Left ventricle myocardium superior (tissue), 1 donor: ENCODE measurements at regions of chr1 and their contacts with region 1.

Region 1: DNA sequence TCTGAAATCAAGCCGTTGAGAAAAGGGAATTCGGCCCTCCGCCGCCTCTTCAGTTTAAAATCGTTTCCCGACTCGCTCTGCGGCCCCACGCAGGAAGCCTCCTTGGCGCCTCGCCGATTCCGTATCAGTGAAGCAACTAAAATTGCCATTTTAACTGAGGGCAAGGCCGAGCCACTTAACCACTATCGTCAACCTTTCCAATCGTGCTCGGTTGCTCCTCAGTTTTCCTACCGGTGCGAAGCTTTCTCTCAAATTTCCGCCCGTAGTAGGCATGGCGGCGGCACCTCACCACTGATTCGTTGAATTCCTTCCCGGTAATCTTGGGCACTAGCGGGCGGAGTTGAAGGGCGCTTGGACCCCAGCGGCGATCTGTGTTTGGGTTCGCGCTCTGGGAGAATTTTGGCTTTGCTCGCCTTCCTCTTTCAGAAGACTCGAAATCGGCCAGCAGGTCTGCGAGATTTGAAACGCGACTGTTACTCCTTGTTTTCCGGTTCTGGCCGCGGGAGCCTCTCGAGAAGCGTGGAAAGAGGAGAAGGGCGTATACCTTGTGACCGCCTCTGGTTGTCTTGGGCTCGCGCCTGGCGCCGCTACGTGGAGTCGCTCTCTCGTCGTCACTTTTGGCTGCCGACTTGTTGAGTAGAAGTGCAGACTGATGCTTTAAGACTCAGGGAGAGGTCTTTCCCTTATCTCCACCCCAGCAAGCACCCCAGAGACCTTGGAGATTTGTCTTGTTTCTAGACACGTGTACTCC is at the starts of genes CENPL and DARS2:
- DNase-seq: peak; percentile 98
- ATAC-seq: peak; percentile 99
- total RNA-seq, gene CENPL: 3.2 TPM
- total RNA-seq, gene DARS2: 12.4 TPM

Region 2: DNA sequence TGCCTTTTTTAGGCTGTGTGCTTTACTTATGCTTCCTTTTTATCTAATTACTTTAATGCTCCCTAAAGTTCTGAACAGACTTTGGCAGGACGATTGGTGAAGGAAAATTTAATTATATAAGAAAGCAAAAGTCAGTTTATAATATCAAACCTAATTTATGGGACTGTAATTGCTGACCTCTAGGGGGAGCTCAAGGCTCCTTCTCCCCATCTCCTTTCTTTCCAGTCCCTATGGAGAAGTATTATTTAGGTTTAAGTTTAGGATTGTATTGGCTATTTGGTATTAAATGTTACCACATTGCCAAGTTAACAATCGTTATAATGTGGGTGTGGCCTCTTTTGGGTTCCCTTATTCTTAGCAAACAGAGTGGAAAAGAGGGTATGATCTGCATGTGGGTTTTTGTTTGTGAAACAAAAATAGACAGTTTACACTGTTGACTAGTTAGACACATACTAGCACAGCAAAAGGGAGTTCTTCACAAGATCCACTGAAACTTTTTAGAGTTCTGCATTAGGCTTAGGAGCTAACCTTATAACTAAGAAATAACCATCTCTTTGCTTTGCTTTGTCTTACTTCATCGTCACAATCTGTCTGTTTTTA is 569.2 kb before region 1 on chr1:
- intact Hi-C with region 1: loop called (anchors 10 kb)
- DNase-seq: no peak
- ATAC-seq: no peak

Region 3: DNA sequence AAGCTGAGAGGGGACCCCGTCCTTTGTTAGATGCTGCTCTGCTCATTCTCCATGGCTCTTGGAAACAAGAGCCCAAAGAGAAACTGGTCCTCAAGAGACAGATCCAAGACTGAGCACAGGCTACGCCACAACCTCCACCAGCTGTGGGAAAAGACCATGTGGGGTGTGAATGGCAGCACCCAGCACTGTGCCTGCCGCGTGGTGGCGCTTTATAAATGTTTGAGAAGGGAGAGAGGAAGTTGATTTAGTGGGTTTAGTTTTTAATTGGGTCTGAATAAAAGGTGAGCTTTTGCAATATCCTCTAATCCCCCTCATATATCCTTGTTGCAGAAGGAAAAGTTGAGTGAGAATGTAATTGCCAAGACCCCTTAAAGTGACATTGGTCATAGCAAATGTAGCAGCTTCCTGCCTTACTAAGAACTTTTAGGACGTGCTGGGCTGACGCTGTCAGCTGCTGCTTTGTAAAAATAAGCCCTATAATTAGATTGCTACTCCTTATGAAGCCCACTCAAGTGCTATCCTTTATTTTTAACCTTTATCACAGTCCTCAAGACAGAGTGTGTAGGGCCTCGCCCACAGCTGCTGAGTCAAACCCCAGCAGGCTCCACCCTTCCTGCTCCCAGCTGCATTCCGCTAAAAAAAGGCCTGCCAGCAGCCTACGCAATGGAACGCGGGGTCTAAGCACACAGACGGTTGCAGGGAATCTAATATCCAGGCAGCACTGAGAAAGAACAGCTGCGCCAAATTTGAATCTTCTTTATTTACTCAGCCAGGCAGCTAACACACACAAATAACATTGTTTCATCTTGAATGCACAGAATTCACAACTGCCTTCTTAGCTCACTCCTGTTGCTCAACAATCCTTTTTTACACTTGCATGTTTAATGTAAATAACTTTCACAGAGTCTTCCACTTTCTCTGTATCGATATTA is 394.8 kb before region 1 on chr1:
- intact Hi-C with region 1: loop called (anchors 5 kb)
- DNase-seq: peak; percentile 90
- ATAC-seq: peak; percentile 98

Region 4: GRCh38 chr1:174912264-174912663 is 1087.8 kb after region 1 on chr1:
- intact Hi-C with region 1: no loop called
- DNase-seq: no peak
- ATAC-seq: no peak